HEK293 (cell line): ENCODE measurements at regions of chr3 and their contacts with region 1.

Region 1: GRCh38 chr3:46449755-46450552 is 14.8 kb downstream of the LTF start:
- H3K4me3 ChIP-seq: no peak overlapping the region
- H3K27ac ChIP-seq: no peak overlapping the region
- H3K4me1 ChIP-seq: no peaks in the 10 kb centered on the region
- CTCF ChIP-seq: no peak

Region 2: DNA sequence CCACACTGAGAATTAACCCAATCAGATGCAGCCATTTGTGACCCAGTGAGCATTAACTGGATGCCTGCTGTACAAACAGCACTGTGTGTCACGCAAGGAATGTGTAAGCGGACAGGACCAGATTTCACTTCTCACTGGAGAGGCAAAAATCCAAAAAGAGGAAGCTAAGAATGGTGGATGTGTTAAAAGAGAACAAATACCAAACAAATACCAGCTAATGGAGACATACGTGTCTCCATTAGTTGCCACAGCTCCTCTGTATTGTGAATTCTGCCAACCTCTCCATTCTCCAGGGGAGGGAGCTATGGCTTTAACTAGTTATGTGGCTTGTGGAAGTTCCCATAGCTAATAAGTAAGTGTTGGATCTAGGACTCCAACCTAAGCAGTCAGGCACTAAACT is 12.2 kb after region 1 on chr3:
- CTCF ChIA-PET with region 1: interaction called, 10 read pairs
- POLR2A ChIA-PET with region 1: no interaction called
- H3K4me3 ChIP-seq: no peak overlapping the region
- H3K27ac ChIP-seq: no peak overlapping the region
- H3K4me1 ChIP-seq: no peaks in the 10 kb centered on the region
- CTCF ChIP-seq: no peak